CD8-positive, alpha-beta T cell (primary cell): ENCODE measurements at regions of chr15 and their contacts with region 1.

Region 1: DNA sequence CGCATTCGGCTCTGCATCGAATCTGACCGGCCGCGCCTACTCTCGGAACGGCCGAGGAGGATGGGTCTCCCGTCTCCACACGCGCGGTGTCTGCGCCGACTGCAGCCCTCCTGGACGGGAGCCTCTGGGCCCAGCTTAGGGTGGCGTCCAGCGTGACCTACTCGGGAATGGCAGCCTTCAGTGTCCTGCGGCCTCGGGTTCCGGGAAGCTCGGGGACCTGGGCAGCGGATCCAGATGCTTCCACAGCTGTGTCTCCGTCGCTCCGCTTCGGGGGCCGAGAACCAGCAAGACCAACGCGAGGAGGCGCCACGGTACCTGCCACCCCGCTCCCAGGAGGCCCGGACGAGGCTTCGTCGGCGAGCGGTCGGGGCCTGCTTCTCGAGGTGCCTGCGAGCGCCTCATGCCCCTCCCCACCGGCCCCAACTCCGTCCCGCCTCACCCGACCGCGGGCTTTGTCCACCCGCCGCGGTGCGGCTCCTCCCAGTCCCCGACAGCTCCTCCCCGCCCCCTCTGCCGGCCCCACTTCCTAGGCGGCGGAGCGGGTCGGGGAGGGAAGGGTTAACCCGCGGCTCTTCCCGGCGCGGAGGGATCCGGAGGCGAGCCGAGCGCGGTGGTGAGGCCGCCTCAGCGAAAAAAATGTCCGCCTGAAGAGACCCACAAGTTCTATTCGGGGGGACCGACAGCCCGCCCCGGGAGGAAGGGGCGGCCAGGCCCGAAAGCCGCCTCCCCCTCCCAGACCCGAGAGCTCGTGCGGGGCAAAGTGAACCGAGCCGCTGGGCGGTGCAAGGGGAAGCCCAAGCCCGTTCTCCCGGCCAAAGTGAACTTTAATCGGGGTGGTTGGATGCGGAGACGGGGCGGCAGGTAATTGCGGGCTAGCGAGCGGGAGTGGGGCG is at the start of gene TCF12:
- DNase-seq: peak; percentile 76 to 96 (median 88)
- ATAC-seq: peak; percentile 70
- H3K4me3 ChIP-seq: peak within 1 kb of the TSS; percentile 89 to 96
- H3K4me3 Mint-ChIP-seq: peak within 1 kb of the TSS; percentile 88
- H3K27ac ChIP-seq: peak within 1 kb of the TSS; percentile 64 to 84
- H3K27ac Mint-ChIP-seq: peak within 1 kb of the TSS; percentile 93
- H3K4me1 ChIP-seq: peaks cover 25% of the 10 kb centered on the region
- H3K4me1 Mint-ChIP-seq: peaks cover 46% of the 10 kb centered on the region
- H3K27me3 ChIP-seq: no peaks in the 10 kb centered on the region
- H3K27me3 Mint-ChIP-seq: no peaks in the 10 kb centered on the region
- CTCF ChIP-seq: peak; percentile 50
- total RNA-seq, gene TCF12: 45.0 to 47.2 TPM

Region 2: DNA sequence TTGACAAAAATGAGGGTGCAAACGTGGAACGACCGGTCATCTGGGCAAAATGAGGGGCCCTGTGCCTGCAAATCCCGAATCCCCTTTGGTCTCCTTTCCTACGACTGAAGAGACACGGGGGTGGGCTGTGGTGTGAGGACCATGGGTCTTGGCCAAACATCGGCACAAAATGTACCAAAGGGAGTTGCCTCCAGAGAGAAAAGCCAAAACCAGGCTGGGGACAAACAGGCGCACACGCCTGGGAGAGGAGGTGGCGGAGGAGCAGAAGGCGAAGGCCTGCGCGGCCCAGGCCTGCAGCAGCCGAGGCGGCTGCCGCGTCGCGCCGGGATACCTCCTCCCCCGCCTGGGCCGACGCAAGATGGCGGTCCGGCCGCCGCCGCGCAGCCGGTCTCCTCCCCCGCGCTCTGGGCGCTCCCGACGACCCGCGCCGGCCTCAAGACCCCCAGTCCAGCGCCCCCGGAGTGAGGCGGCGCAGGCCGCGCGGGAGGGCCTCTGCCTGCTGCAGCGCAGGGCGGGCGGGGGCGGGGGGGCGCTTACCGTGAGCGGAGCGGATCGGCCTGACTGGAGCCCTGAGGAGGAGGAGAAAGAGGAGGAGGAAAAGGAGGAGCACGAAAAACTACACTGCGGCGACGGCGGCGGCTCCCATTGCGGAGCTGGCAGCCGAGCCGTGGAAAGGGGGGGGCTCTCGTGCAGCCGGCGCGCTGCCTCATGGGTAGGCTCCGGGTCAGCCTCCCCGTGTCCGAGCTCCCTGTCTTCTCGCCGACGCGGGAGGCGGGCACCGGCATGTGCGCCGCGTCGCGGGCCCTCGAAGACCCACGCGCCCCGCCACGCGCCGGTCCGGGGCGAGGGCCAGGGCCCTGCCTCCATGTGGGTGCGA is 185.1 kb before region 1 on chr15 and contains the start of gene ZNF280D:
- CTCF ChIA-PET with region 1: interaction called, 4 read pairs
- POLR2A ChIA-PET with region 1: interaction called, 6 read pairs
- intact Hi-C with region 1: loop called (anchors 1 to 2 kb)
- DNase-seq: peak; percentile 56 to 88 (median 77)
- ATAC-seq: peak; percentile 84
- H3K4me3 ChIP-seq: peak within 1 kb of the TSS; percentile 73 to 76
- H3K4me3 Mint-ChIP-seq: peak within 1 kb of the TSS; percentile 89
- H3K27ac ChIP-seq: peak within 1 kb of the TSS; percentile 68 to 72
- H3K27ac Mint-ChIP-seq: peak within 1 kb of the TSS; percentile 95
- H3K4me1 ChIP-seq: peaks cover 23% of the 10 kb centered on the region
- H3K4me1 Mint-ChIP-seq: peaks cover 43% of the 10 kb centered on the region
- H3K27me3 ChIP-seq: no peaks in the 10 kb centered on the region
- H3K27me3 Mint-ChIP-seq: no peaks in the 10 kb centered on the region
- CTCF ChIP-seq: no peak
- total RNA-seq, gene ZNF280D: 19.6 to 27.4 TPM

Region 3: DNA sequence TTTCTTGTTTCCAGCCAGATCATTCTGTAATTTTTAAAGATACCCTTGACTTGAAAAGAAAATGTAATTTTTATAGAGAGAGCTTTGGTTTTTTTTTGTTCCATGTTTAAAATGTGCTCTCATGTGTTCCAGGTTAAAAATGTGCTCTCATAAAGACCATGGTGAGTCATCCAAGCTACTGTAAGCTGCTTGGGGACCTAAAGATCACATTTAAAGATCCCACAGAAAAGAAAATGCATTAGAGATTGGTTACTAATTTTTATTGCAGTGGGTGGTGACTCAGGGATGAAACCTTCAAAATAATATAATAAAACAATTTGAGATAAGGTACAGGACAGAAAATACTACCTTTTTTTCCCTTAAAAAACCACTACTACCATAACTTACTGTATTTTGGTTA is 11.1 kb after region 1 on chr15:
- CTCF ChIA-PET with region 1: interaction called, 15 read pairs
- POLR2A ChIA-PET with region 1: interaction called, 12 read pairs
- intact Hi-C with region 1: loop called in 1 of 2 experiments (anchors 2 kb)
- DNase-seq: no peak
- ATAC-seq: no peak
- H3K4me3 ChIP-seq: no peak overlapping the region
- H3K4me3 Mint-ChIP-seq: no peak overlapping the region
- H3K27ac ChIP-seq: no peak overlapping the region
- H3K27ac Mint-ChIP-seq: peak overlapping the region; percentile 16
- H3K4me1 ChIP-seq: peaks cover 23% of the 10 kb centered on the region
- H3K4me1 Mint-ChIP-seq: peaks cover 76% of the 10 kb centered on the region
- H3K27me3 ChIP-seq: no peaks in the 10 kb centered on the region
- H3K27me3 Mint-ChIP-seq: no peaks in the 10 kb centered on the region
- CTCF ChIP-seq: no peak

Region 4: GRCh38 chr15:57079931-57080620 is 161.8 kb after region 1 on chr15:
- CTCF ChIA-PET with region 1: interaction called, 3 read pairs
- POLR2A ChIA-PET with region 1: no interaction called
- intact Hi-C with region 1: loop called (anchors 1 kb)
- DNase-seq: peak in 1 of 9 experiments; percentile 14
- ATAC-seq: peak; percentile 42
- H3K4me3 ChIP-seq: no peak overlapping the region
- H3K4me3 Mint-ChIP-seq: no peak overlapping the region
- H3K27ac ChIP-seq: no peak overlapping the region
- H3K27ac Mint-ChIP-seq: no peak overlapping the region
- H3K4me1 ChIP-seq: peaks cover 6% of the 10 kb centered on the region
- H3K4me1 Mint-ChIP-seq: peaks cover 36% of the 10 kb centered on the region
- H3K27me3 ChIP-seq: no peaks in the 10 kb centered on the region
- H3K27me3 Mint-ChIP-seq: no peaks in the 10 kb centered on the region
- CTCF ChIP-seq: no peak

Region 5: GRCh38 chr15:57213862-57214261 is 295.6 kb after region 1 on chr15:
- CTCF ChIA-PET with region 1: interaction called, 3 read pairs
- POLR2A ChIA-PET with region 1: no interaction called
- intact Hi-C with region 1: loop called (anchors 2 to 5 kb)
- DNase-seq: peak in 2 of 9 experiments; percentile 28 to 44
- ATAC-seq: no peak
- H3K4me3 ChIP-seq: no peak overlapping the region
- H3K4me3 Mint-ChIP-seq: no peak overlapping the region
- H3K27ac ChIP-seq: no peak overlapping the region
- H3K27ac Mint-ChIP-seq: no peak overlapping the region
- H3K4me1 ChIP-seq: peaks cover 7% of the 10 kb centered on the region
- H3K4me1 Mint-ChIP-seq: peaks cover 28% of the 10 kb centered on the region
- H3K27me3 ChIP-seq: no peaks in the 10 kb centered on the region
- H3K27me3 Mint-ChIP-seq: no peaks in the 10 kb centered on the region
- CTCF ChIP-seq: peak; percentile 42

Region 6: GRCh38 chr15:57706405-57707209 is 788.3 kb after region 1 on chr15 and contains the start of gene POLR2M:
- CTCF ChIA-PET with region 1: no interaction called
- POLR2A ChIA-PET with region 1: no interaction called
- intact Hi-C with region 1: loop called in 1 of 2 experiments (anchors 10 kb)
- DNase-seq: peak; percentile 81 to 98 (median 89)
- ATAC-seq: peak; percentile 87
- H3K4me3 ChIP-seq: peak within 1 kb of the TSS; percentile 85 to 87
- H3K4me3 Mint-ChIP-seq: peak within 1 kb of the TSS; percentile 87
- H3K27ac ChIP-seq: peak within 1 kb of the TSS; percentile 89 to 98
- H3K27ac Mint-ChIP-seq: peak within 1 kb of the TSS; percentile 92
- H3K4me1 ChIP-seq: peaks cover 56% of the 10 kb centered on the region
- H3K4me1 Mint-ChIP-seq: peaks cover 74% of the 10 kb centered on the region
- H3K27me3 ChIP-seq: no peaks in the 10 kb centered on the region
- H3K27me3 Mint-ChIP-seq: no peaks in the 10 kb centered on the region
- CTCF ChIP-seq: no peak
- total RNA-seq, gene POLR2M: 96.7 to 103 TPM